Naive thymus-derived CD4-positive, alpha-beta T cell (primary cell): ENCODE measurements at regions of chr14 and their contacts with region 1.

Region 1: DNA sequence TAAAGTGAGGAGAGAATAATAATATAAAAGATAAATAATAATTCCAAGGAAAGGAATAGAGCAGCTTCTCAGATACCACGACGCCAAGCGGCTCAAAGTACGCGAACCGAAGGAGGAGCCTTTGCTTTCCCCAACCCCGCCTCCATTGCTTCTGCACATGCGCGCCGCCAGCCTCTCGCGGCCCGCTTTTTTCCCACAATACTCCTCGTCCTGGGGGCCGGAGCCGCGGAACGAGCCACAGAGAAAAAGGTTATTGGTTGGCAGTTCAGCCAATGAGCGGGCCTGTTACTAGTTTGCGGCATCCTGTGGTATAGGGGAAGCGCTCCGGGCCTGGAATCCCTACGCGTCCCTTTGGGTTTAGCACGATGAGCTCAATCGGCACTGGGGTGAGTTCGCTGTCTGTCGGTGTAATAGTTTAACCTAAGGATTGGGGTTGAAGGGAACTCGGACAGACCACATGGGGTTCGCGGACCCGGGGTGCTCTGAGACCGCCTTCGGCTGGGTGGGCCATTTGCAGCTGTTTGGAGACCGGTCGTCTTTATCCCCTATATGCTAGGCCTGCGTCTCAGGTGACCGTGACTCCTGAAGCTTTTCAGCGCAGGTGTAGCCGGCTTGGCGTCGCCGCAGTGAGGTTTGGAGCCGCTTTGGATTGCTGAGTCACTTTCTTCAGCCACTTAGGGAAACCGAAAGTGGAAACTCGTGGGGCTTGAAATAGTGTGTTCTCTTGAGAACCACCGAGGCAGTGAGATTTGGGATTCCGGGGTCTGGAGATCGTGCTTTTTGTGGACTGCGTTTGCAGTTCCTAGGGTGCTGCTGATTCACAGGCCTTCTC is at the start of gene PSMA3:
- DNase-seq: peak; percentile 95 to 98 (median 98)
- ATAC-seq: peak; percentile 96
- H3K4me3 ChIP-seq: peak within 1 kb of the TSS; percentile 100
- H3K4me3 Mint-ChIP-seq: peak within 1 kb of the TSS; percentile 89 to 99 (median 96)
- H3K27ac ChIP-seq: peak within 1 kb of the TSS; percentile 86
- H3K27ac Mint-ChIP-seq: peak within 1 kb of the TSS; percentile 97 to 99 (median 98)
- H3K4me1 ChIP-seq: peaks cover 23 to 26% of the 10 kb centered on the region in 2 donors
- H3K4me1 Mint-ChIP-seq: peaks cover 27 to 61% (median 52%) of the 10 kb centered on the region in 7 donors
- H3K27me3 ChIP-seq: no peaks in the 10 kb centered on the region
- H3K27me3 Mint-ChIP-seq: peaks cover 0 to 1% (median 0%) of the 10 kb centered on the region in 5 donors
- total RNA-seq, gene PSMA3: 76.5 to 357 (median 97.1) TPM

Region 2: DNA sequence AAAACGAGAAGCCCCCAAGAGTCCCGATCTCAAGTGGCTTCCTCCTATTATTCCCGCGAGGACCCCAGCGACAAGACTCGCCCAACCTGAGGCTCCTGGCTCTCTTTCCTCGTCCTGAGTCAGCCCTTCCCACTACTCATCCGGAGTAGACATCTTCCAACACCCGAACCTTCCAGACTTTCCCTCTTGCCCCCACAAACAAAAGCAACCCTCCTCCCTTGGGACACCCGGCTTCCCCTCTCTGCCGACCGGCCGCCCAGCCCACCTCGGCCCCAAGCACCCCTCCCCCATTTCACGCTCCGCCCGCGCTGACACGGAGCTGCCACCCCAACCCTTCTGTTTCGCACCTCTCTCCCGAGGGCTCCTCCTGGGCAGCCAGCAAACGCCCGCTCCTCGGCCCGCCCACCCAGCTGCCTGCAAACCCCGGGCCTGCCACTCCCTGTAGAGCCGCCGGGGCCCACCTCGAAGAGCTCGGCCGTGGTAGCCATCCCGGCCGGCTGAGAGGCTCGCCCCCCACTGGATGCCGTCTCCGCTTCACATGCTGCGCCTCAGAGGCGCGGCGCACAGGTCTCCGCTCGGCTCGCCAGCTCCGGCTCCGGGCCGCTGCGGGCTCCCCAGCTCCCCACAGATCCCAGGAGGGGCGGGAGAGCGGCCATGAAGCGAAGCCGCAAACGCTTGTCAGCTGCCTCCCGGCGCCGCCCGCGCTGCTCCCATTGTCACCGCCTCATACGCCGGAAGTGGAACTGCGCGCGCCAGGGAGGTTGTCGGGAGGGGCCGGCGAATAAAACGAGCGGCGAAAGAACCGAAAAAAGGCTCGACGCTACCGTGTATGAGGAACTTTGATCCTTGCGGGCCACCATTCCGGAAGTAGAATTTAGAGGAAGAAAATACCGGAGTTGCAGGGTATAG is 976.4 kb before region 1 on chr14 and contains the starts of genes AP5M1 and EXOC5:
- CTCF ChIA-PET with region 1: interaction called, 4 read pairs
- POLR2A ChIA-PET with region 1: no interaction called
- intact Hi-C with region 1: loop called (anchors 1 to 10 kb)
- DNase-seq: peak; percentile 78 to 95 (median 93)
- ATAC-seq: peak; percentile 89
- H3K4me3 ChIP-seq: peak within 1 kb of the TSS; percentile 89
- H3K4me3 Mint-ChIP-seq: peak within 1 kb of the TSS; percentile 97 to 100 (median 99)
- H3K27ac ChIP-seq: peak within 1 kb of the TSS; percentile 91
- H3K27ac Mint-ChIP-seq: peak within 1 kb of the TSS; percentile 98 to 100 (median 99)
- H3K4me1 ChIP-seq: peaks cover 29 to 34% of the 10 kb centered on the region in 2 donors
- H3K4me1 Mint-ChIP-seq: peaks cover 41 to 93% (median 76%) of the 10 kb centered on the region in 7 donors
- H3K27me3 ChIP-seq: no peaks in the 10 kb centered on the region
- H3K27me3 Mint-ChIP-seq: no peaks in the 10 kb centered on the region
- total RNA-seq, gene AP5M1: 42.3 to 62.8 (median 52.1) TPM
- total RNA-seq, gene EXOC5: 27.3 to 71.6 (median 42.2) TPM

Region 3: GRCh38 chr14:58014778-58015177 is 230.0 kb before region 1 on chr14:
- CTCF ChIA-PET with region 1: no interaction called
- POLR2A ChIA-PET with region 1: no interaction called
- intact Hi-C with region 1: no loop called
- DNase-seq: no peak
- ATAC-seq: no peak
- H3K4me3 ChIP-seq: no peak overlapping the region
- H3K4me3 Mint-ChIP-seq: no peak overlapping the region
- H3K27ac ChIP-seq: no peak overlapping the region
- H3K27ac Mint-ChIP-seq: no peak overlapping the region
- H3K4me1 ChIP-seq: no peaks in the 10 kb centered on the region
- H3K4me1 Mint-ChIP-seq: no peaks in the 10 kb centered on the region
- H3K27me3 ChIP-seq: no peaks in the 10 kb centered on the region
- H3K27me3 Mint-ChIP-seq: peaks cover 0 to 32% (median 11%) of the 10 kb centered on the region in 5 donors

Region 4: DNA sequence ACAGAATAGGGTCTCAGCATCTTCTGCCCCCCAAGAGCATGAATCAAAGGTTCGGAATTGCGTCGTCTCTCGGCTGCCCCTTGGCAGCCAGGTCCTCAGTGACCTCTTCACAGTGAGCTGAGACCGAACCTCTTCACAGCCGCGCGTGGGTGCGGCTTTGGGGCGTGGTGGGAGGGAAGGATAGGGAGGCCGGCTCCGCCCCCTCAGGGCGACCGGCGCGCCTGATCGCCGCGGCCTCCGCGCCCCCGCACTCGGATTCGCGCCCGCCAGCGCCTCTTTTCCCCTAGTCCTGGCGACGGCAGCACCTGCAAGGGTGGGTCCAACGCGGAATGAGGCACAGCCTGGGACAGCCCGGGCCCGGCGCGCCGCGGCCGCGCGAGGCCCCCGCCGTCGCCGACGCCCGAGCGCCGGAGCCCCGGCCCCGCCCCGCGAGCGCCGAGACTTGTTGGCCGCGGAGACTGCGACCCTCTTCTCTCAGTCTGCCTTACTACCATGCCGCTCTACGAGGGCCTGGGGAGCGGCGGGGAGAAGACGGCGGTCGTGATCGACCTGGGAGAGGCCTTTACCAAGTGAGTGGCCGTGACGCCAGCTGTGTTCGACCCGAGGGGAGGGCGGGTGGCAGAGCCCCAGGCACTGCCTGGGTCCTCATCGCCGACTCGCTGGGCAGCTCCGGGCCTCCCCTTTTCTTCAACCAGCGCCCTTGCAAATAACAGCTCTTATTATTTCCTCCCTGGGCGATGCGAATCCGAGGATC is 44.9 kb before region 1 on chr14 and contains the start of gene ACTR10:
- CTCF ChIA-PET with region 1: no interaction called
- POLR2A ChIA-PET with region 1: interaction called, 20 read pairs
- intact Hi-C with region 1: loop called (anchors 1 kb)
- DNase-seq: peak; percentile 80 to 93 (median 88)
- ATAC-seq: peak; percentile 94
- H3K4me3 ChIP-seq: peak within 1 kb of the TSS; percentile 75
- H3K4me3 Mint-ChIP-seq: peak within 1 kb of the TSS; percentile 90 to 99 (median 97)
- H3K27ac ChIP-seq: peak within 1 kb of the TSS; percentile 87
- H3K27ac Mint-ChIP-seq: peak within 1 kb of the TSS; percentile 93 to 99 (median 98)
- H3K4me1 ChIP-seq: peaks cover 15 to 27% of the 10 kb centered on the region in 2 donors
- H3K4me1 Mint-ChIP-seq: peaks cover 21 to 60% (median 48%) of the 10 kb centered on the region in 7 donors
- H3K27me3 ChIP-seq: no peaks in the 10 kb centered on the region
- H3K27me3 Mint-ChIP-seq: peaks cover 0 to 7% (median 0%) of the 10 kb centered on the region in 5 donors
- total RNA-seq, gene ACTR10: 40.0 to 54.6 (median 50.4) TPM

Region 5: GRCh38 chr14:58280954-58281787 is 36.4 kb after region 1 on chr14:
- CTCF ChIA-PET with region 1: no interaction called
- POLR2A ChIA-PET with region 1: interaction called, 5 read pairs
- intact Hi-C with region 1: loop called in 1 of 2 experiments (anchors 5 kb)
- DNase-seq: peak in 8 of 9 donors; percentile 30 to 67 (median 50)
- ATAC-seq: peak; percentile 88
- H3K4me3 ChIP-seq: no peak overlapping the region
- H3K4me3 Mint-ChIP-seq: peak overlapping the region; percentile 27 to 79 (median 71)
- H3K27ac ChIP-seq: peak overlapping the region; percentile 72
- H3K27ac Mint-ChIP-seq: peak overlapping the region; percentile 83 to 97 (median 93)
- H3K4me1 ChIP-seq: peaks cover 13 to 45% of the 10 kb centered on the region in 2 donors
- H3K4me1 Mint-ChIP-seq: peaks cover 50 to 89% (median 79%) of the 10 kb centered on the region in 7 donors
- H3K27me3 ChIP-seq: no peaks in the 10 kb centered on the region
- H3K27me3 Mint-ChIP-seq: no peaks in the 10 kb centered on the region

Region 6: DNA sequence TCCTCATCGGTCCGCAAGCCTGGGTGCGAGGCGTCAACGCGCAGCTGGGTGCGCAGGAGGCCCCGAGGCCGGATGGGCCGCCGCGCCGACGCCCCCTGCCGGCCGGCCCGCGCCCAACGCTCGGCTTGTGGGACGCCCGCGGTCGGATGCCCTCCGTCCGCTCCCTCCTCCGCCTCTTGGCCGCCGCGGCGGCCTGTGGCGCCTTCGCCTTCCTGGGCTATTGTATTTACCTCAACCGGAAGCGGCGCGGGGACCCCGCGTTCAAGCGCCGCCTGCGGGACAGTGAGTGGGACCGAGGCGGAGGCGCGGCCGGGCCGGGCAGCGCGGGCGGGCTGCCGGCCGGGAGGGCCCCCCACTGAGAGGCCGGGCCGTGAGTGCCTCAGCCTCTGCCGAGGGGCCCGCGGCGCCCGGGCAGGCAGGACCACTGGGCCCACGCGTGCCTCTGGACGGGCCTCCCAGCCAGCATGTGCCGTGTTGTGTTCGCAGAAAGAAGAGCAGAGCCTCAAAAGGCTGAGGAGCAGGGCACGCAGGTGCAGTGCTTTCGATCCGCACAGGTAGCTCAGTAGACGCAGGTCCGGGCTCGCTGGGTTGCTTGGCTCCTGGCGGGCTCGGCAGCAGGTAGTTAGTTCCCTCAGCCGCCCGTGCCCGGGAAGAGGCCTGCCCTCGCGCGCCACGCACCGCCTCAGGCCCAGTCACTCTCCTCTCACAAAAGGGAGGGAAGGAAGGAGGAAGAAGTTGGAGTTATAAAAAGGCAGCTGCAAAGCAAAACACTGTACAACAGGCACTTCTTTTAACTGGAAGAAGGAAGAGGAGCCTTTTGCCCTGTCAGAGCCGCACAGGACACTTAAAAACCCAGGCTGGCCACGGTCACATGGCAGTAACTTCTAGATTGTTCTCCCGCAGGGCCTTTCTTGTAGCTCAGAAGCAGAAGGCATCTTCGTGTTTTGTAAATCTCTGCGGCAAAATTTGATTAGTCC is 151.3 kb after region 1 on chr14 and contains the start of gene TOMM20L:
- CTCF ChIA-PET with region 1: no interaction called
- POLR2A ChIA-PET with region 1: interaction called, 4 read pairs
- intact Hi-C with region 1: loop called (anchors 1 to 5 kb)
- DNase-seq: peak; percentile 54 to 84 (median 72)
- ATAC-seq: peak; percentile 92
- H3K4me3 ChIP-seq: peak within 1 kb of the TSS; percentile 33
- H3K4me3 Mint-ChIP-seq: peak within 1 kb of the TSS; percentile 78 to 93 (median 86)
- H3K27ac ChIP-seq: peak within 1 kb of the TSS; percentile 72
- H3K27ac Mint-ChIP-seq: peak within 1 kb of the TSS; percentile 66 to 97 (median 95)
- H3K4me1 ChIP-seq: peaks cover 8 to 9% of the 10 kb centered on the region in 2 donors
- H3K4me1 Mint-ChIP-seq: peaks cover 6 to 19% (median 12%) of the 10 kb centered on the region in 7 donors
- H3K27me3 ChIP-seq: no peaks in the 10 kb centered on the region
- H3K27me3 Mint-ChIP-seq: peaks cover 0 to 2% (median 0%) of the 10 kb centered on the region in 5 donors
- total RNA-seq, gene TOMM20L: not detected